Activated CD4-positive, alpha-beta T cell treated with anti-CD3 and anti-CD28 coated beads for 36 hours (primary cell): ENCODE measurements at regions of chr14 and their contacts with region 1.

Region 1: GRCh38 chr14:99518441-99519346 is 37.5 kb downstream of the CCNK start:
- DNase-seq: peak; percentile 91
- ATAC-seq: peak; percentile 93
- H3K4me3 Mint-ChIP-seq: no peak overlapping the region
- H3K27ac Mint-ChIP-seq: no peak overlapping the region
- H3K4me1 Mint-ChIP-seq: no peaks in the 10 kb centered on the region
- H3K27me3 Mint-ChIP-seq: no peaks in the 10 kb centered on the region

Region 2: DNA sequence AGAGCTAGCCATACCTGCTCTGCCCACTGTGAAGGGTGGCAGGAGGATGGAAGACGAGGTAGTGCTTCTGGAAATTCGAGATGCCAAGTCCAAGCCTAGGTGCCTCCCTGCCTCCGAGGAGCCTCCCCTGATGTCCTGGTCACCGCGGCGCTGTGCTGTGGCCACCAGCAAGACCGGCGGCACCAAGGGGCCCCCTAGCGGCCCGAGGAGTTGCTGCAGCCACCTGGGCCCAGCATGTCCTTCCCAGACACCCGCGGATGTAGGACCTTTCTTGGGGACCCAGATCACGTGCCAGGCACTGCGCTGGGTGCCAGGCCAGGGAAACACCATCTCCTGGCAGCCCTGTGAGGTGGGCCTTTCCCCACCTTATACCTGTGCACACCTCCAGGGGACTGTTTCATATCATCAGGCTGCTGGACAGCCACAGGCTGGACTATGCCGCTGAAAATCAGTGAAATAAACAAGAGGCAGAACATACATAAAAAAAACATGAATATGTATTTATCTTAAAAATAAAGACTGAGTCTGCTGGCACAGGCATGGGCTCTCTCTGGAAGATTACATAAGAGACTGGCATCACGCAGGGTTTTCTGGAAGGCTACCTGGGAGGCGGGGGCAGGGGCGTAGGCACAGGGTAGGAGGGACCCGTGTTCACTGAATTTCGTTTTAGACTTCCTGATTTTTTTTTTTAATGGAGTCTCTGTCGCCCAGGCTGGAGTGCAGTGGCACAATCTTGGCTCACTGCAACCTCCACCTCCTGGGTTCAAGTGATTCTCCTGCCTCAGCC is 110.3 kb after region 1 on chr14:
- CTCF ChIA-PET with region 1: interaction called, 6 read pairs
- POLR2A ChIA-PET with region 1: no interaction called
- intact Hi-C with region 1: loop called (anchors 1 kb)
- DNase-seq: peak; percentile 83
- ATAC-seq: peak; percentile 88
- H3K4me3 Mint-ChIP-seq: no peak overlapping the region
- H3K27ac Mint-ChIP-seq: no peak overlapping the region
- H3K4me1 Mint-ChIP-seq: peaks cover 2% of the 10 kb centered on the region
- H3K27me3 Mint-ChIP-seq: peaks cover 12% of the 10 kb centered on the region